B cell (primary cell): ENCODE measurements at regions of chr13 and their contacts with region 1.

Region 1: DNA sequence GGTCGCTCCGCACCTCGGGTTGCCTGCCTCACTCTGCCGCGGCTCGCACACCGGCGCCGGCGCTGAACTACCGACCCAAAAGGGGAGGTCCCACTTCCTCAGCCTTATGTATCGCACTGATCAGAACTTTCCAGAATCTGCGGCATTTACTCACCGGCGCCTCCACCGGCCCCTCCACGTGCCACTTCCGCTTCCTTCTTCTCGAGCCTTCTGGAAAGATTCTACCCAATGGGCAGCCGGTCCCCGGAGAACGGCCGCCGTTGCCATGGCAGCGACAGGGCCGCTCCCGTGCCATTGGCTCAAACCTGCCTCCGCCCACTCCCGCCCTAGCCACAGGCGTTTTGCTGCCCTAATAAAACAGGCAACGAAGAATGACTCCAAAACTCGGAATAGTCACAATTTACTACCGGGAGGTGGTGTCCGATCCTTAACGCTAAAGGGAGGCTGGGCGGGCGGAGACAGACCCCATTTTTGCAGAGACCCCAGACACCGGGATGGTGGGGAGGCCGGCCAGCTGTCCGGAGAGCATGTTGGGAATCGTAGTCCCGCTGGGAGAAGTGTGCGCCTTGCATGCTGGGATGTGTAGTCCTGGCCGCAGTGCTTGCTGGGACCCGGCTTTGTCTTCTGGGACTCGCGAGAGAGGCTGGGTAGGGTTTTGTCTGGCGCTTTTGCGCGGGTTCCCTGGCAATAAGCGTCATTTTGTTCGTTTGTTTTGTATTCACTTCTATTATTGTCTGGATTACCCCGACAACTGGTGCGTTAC is at the start of gene HSPH1:
- DNase-seq: peak; percentile 100
- ATAC-seq: peak; percentile 83
- H3K4me3 ChIP-seq: peak within 1 kb of the TSS; percentile 82 to 93 (median 88)
- H3K4me3 Mint-ChIP-seq: peak within 1 kb of the TSS; percentile 96
- H3K27ac ChIP-seq: peak within 1 kb of the TSS; percentile 94 to 96
- H3K27ac Mint-ChIP-seq: peak within 1 kb of the TSS; percentile 99
- H3K4me1 ChIP-seq: peaks cover 22% of the 10 kb centered on the region in 2 donors
- H3K4me1 Mint-ChIP-seq: peaks cover 34% of the 10 kb centered on the region
- H3K27me3 ChIP-seq: no peaks in the 10 kb centered on the region
- H3K27me3 Mint-ChIP-seq: no peaks in the 10 kb centered on the region
- CTCF ChIP-seq: no peak
- total RNA-seq, gene HSPH1: 52.9 and 56.4 TPM in 2 replicates

Region 2: GRCh38 chr13:29595380-29596063 is 1566.5 kb before region 1 on chr13 and contains the start of gene SLC7A1:
- CTCF ChIA-PET with region 1: no interaction called
- POLR2A ChIA-PET with region 1: no interaction called
- intact Hi-C with region 1: loop called (anchors 2 kb)
- DNase-seq: peak; percentile 91
- ATAC-seq: peak; percentile 91
- H3K4me3 ChIP-seq: peak within 1 kb of the TSS; percentile 49 to 89 (median 68)
- H3K4me3 Mint-ChIP-seq: peak within 1 kb of the TSS; percentile 92
- H3K27ac ChIP-seq: peak within 1 kb of the TSS; percentile 40 to 82
- H3K27ac Mint-ChIP-seq: peak within 1 kb of the TSS; percentile 92
- H3K4me1 ChIP-seq: peaks cover 9 to 13% of the 10 kb centered on the region in 2 donors
- H3K4me1 Mint-ChIP-seq: peaks cover 34% of the 10 kb centered on the region
- H3K27me3 ChIP-seq: no peaks in the 10 kb centered on the region
- H3K27me3 Mint-ChIP-seq: peaks cover 6% of the 10 kb centered on the region
- CTCF ChIP-seq: no peak
- total RNA-seq, gene SLC7A1: 23.1 and 24.2 TPM in 2 replicates

Region 3: GRCh38 chr13:29850224-29850898 is 1311.6 kb before region 1 on chr13 and contains the start of gene UBL3:
- CTCF ChIA-PET with region 1: no interaction called
- POLR2A ChIA-PET with region 1: no interaction called
- intact Hi-C with region 1: loop called (anchors 1 kb)
- DNase-seq: peak; percentile 97
- ATAC-seq: peak; percentile 92
- H3K4me3 ChIP-seq: peak within 1 kb of the TSS; percentile 78 to 99 (median 87)
- H3K4me3 Mint-ChIP-seq: peak within 1 kb of the TSS; percentile 91
- H3K27ac ChIP-seq: peak within 1 kb of the TSS; percentile 93 to 94
- H3K27ac Mint-ChIP-seq: peak within 1 kb of the TSS; percentile 99
- H3K4me1 ChIP-seq: peaks cover 17 to 20% of the 10 kb centered on the region in 2 donors
- H3K4me1 Mint-ChIP-seq: peaks cover 28% of the 10 kb centered on the region
- H3K27me3 ChIP-seq: no peaks in the 10 kb centered on the region
- H3K27me3 Mint-ChIP-seq: no peaks in the 10 kb centered on the region
- CTCF ChIP-seq: no peak
- total RNA-seq, gene UBL3: 26.4 and 27.9 TPM in 2 replicates

Region 4: DNA sequence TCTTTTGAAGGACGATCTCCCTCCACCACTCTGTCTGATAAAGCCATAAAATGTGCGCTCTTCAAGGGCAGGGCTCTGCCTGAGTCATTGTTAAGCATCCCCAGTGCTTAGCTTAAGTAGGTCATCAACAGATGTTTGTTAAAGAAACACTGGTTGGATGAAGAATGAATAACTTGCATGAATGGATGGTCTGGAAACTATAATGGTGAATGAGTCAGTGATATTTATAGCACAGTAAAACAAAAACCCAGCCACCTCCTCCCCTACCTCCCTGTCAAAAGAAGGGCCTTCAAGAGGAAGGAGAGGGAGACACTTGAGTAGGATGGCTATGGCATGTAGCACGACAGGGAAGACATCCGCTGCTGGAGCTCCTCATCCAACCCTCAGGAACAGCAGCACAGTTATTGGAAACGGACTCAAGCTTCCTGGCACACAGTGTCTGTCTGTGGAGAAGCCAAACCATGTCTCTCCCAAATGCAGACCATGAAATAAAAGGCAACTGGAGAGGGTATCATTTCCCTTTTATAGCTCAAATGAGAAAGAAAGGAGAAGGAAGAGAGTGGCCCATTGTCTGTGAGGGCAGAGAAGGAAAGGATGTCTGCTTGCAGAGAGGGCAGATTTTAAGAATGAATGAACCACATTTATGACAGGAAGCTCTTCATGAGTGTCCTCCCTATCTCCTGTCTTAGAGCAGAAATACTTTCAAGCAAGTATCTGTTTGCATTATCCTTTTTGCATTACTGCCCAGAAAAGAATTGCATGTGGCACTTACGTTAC is 1128.1 kb before region 1 on chr13:
- CTCF ChIA-PET with region 1: no interaction called
- POLR2A ChIA-PET with region 1: no interaction called
- intact Hi-C with region 1: no loop called
- DNase-seq: no peak
- ATAC-seq: no peak
- H3K4me3 ChIP-seq: no peak overlapping the region
- H3K4me3 Mint-ChIP-seq: no peak overlapping the region
- H3K27ac ChIP-seq: no peak overlapping the region
- H3K27ac Mint-ChIP-seq: no peak overlapping the region
- H3K4me1 ChIP-seq: no peaks in the 10 kb centered on the region
- H3K4me1 Mint-ChIP-seq: no peaks in the 10 kb centered on the region
- H3K27me3 ChIP-seq: peaks cover 0 to 6% (median 3%) of the 10 kb centered on the region in 4 experiments
- H3K27me3 Mint-ChIP-seq: peaks cover 31% of the 10 kb centered on the region
- CTCF ChIP-seq: no peak

Region 5: GRCh38 chr13:30306762-30307193 is 855.2 kb before region 1 on chr13:
- CTCF ChIA-PET with region 1: no interaction called
- POLR2A ChIA-PET with region 1: no interaction called
- intact Hi-C with region 1: loop called (anchors 2 kb)
- DNase-seq: peak; percentile 96
- ATAC-seq: peak; percentile 89
- H3K4me3 ChIP-seq: peak overlapping the region; percentile 70 to 97 (median 83)
- H3K4me3 Mint-ChIP-seq: peak overlapping the region; percentile 85
- H3K27ac ChIP-seq: peak overlapping the region; percentile 71 to 87
- H3K27ac Mint-ChIP-seq: peak overlapping the region; percentile 86
- H3K4me1 ChIP-seq: peaks cover 28 to 45% of the 10 kb centered on the region in 2 donors
- H3K4me1 Mint-ChIP-seq: peaks cover 55% of the 10 kb centered on the region
- H3K27me3 ChIP-seq: no peaks in the 10 kb centered on the region
- H3K27me3 Mint-ChIP-seq: no peaks in the 10 kb centered on the region
- CTCF ChIP-seq: no peak

Region 6: DNA sequence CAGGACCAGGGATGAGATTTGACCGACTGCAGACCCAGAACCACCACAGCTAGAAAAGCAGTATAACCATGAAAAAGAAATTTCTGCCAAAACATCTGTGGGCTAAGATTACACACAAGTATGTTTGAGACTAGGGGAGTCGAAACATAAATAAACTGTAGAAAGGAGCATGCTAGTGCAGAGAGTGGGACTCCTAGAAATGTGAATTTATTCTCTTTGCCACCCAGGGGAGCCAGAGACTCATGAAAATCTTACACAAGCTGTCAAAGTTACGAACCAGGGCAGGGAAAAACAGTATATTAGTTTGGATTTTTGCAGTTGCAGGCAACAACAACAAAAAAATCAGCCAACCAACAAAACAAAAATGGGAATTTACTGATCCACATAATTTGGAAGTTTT is 12.0 kb after region 1 on chr13:
- CTCF ChIA-PET with region 1: no interaction called
- POLR2A ChIA-PET with region 1: no interaction called
- intact Hi-C with region 1: no loop called
- DNase-seq: no peak
- ATAC-seq: no peak
- H3K4me3 ChIP-seq: no peak overlapping the region
- H3K4me3 Mint-ChIP-seq: no peak overlapping the region
- H3K27ac ChIP-seq: no peak overlapping the region
- H3K27ac Mint-ChIP-seq: no peak overlapping the region
- H3K4me1 ChIP-seq: no peaks in the 10 kb centered on the region
- H3K4me1 Mint-ChIP-seq: no peaks in the 10 kb centered on the region
- H3K27me3 ChIP-seq: peaks cover 0 to 4% (median 2%) of the 10 kb centered on the region in 4 experiments
- H3K27me3 Mint-ChIP-seq: peaks cover 23% of the 10 kb centered on the region
- CTCF ChIP-seq: no peak

Region 7: DNA sequence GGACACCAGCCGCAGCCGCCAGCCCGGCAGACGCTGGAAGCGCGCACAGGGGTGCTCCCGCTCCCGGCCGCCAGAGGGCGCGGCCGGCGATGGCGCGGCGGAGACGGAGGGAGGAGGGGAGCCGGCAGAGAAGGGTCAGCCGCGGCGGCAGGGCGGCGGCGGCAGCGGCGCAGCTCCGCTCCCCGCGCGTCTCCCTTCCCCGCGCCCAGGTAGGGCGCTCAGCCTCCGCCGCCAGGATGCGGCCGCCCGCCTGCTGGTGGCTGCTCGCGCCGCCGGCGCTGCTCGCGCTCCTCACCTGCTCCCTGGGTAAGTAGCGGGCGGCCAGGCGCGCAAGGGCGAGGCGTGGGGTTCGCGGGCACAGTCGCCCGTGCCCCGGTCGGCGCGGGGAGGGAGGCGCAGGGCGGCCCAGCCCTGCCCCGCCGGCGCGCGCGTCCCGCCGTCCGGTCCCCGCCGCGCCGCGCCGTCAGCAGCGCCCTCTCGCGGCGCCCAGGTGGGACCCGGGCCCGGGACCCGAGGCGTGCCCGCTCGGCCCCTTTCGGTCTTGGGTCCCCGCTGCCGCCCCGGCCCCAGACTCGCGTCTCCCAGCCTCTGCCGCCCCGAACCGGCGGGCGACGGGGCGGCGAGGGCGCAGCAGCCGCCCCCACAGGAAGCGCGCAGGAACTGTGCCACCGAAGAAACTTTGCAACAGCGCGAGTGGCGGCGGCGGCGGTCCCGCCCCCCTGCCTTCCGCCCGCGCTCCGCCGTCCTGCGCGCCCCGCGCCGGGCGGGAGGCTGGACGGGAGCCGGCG is 38.0 kb after region 1 on chr13 and contains the start of gene B3GLCT:
- CTCF ChIA-PET with region 1: interaction called, 14 read pairs
- POLR2A ChIA-PET with region 1: interaction called, 5 read pairs
- intact Hi-C with region 1: loop called (anchors 1 kb)
- DNase-seq: peak; percentile 91
- ATAC-seq: peak; percentile 74
- H3K4me3 ChIP-seq: peak within 1 kb of the TSS; percentile 59 to 77 (median 71)
- H3K4me3 Mint-ChIP-seq: peak within 1 kb of the TSS; percentile 88
- H3K27ac ChIP-seq: peak within 1 kb of the TSS; percentile 80 to 89
- H3K27ac Mint-ChIP-seq: peak within 1 kb of the TSS; percentile 87
- H3K4me1 ChIP-seq: peaks cover 8 to 18% of the 10 kb centered on the region in 2 donors
- H3K4me1 Mint-ChIP-seq: peaks cover 18% of the 10 kb centered on the region
- H3K27me3 ChIP-seq: no peaks in the 10 kb centered on the region
- H3K27me3 Mint-ChIP-seq: no peaks in the 10 kb centered on the region
- CTCF ChIP-seq: peak; percentile 92
- total RNA-seq, gene B3GLCT: 6.2 and 6.8 TPM in 2 replicates

Region 8: GRCh38 chr13:32427852-32428580 is 1266.0 kb after region 1 on chr13 and contains the start of gene N4BP2L1:
- CTCF ChIA-PET with region 1: no interaction called
- POLR2A ChIA-PET with region 1: no interaction called
- intact Hi-C with region 1: loop called (anchors 2 kb)
- DNase-seq: peak; percentile 93
- ATAC-seq: peak; percentile 74
- H3K4me3 ChIP-seq: peak within 1 kb of the TSS; percentile 73 to 93 (median 80)
- H3K4me3 Mint-ChIP-seq: peak within 1 kb of the TSS; percentile 88
- H3K27ac ChIP-seq: peak within 1 kb of the TSS; percentile 95 to 98
- H3K27ac Mint-ChIP-seq: peak within 1 kb of the TSS; percentile 96
- H3K4me1 ChIP-seq: peaks cover 28 to 47% of the 10 kb centered on the region in 2 donors
- H3K4me1 Mint-ChIP-seq: peaks cover 48% of the 10 kb centered on the region
- H3K27me3 ChIP-seq: no peaks in the 10 kb centered on the region
- H3K27me3 Mint-ChIP-seq: no peaks in the 10 kb centered on the region
- CTCF ChIP-seq: no peak
- total RNA-seq, gene N4BP2L1: 52.8 and 59.0 TPM in 2 replicates